Heart left ventricle (tissue), 16 donors: ENCODE measurements at regions of chr1 and their contacts with region 1.

Region 1: GRCh38 chr1:65958561-65959350 is 166.1 kb downstream of the PDE4B start:
- DNase-seq: no peak
- ATAC-seq: peak in 2 of 4 donors; percentile 27 to 54
- H3K4me3 ChIP-seq: no peak overlapping the region
- H3K27ac ChIP-seq: no peak overlapping the region
- H3K4me1 ChIP-seq: no peaks in the 10 kb centered on the region
- H3K27me3 ChIP-seq: no peaks in the 10 kb centered on the region
- CTCF ChIP-seq: peak; percentile 56 to 90 (median 76)
- POLR2A ChIP-seq: no peak

Region 2: DNA sequence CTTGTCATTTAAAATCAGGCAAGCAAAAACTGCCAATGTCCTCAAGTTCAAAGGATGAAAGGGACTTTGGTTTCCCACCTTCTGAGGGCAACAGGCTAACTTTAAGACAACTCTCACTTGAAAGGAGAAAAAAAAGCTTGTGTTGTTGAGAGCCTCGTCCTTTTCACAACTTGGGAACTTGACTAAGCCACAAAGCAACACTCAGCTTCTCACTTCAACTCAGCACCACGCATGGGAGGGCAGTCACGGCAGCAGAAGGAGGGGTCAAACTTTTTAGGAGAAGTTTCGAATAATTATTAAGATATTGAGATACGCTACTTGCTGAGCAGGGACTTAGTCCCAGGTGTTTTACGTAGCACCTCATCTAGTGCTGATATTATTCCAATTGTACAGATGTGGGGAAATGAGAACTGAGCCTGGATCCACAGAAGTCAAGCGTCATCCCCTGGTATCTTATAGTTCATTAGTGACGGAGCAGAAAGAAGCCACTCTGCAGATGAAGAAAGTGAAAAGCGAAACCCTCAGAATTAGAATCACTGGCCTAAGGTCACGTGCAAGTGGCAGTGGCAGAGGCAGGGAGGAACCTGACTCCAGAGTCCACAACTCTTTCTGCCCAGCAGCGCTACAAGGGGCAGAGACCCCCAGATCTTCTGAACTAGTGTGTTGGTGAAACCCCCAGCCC is 1076.0 kb before region 1 on chr1:
- intact Hi-C with region 1: no loop called
- DNase-seq: no peak
- ATAC-seq: no peak
- H3K4me3 ChIP-seq: no peak overlapping the region
- H3K27ac ChIP-seq: no peak overlapping the region
- H3K4me1 ChIP-seq: peaks cover 0 to 62% (median 8%) of the 10 kb centered on the region in 12 donors
- H3K27me3 ChIP-seq: no peaks in the 10 kb centered on the region
- CTCF ChIP-seq: no peak
- POLR2A ChIP-seq: no peak

Region 3: DNA sequence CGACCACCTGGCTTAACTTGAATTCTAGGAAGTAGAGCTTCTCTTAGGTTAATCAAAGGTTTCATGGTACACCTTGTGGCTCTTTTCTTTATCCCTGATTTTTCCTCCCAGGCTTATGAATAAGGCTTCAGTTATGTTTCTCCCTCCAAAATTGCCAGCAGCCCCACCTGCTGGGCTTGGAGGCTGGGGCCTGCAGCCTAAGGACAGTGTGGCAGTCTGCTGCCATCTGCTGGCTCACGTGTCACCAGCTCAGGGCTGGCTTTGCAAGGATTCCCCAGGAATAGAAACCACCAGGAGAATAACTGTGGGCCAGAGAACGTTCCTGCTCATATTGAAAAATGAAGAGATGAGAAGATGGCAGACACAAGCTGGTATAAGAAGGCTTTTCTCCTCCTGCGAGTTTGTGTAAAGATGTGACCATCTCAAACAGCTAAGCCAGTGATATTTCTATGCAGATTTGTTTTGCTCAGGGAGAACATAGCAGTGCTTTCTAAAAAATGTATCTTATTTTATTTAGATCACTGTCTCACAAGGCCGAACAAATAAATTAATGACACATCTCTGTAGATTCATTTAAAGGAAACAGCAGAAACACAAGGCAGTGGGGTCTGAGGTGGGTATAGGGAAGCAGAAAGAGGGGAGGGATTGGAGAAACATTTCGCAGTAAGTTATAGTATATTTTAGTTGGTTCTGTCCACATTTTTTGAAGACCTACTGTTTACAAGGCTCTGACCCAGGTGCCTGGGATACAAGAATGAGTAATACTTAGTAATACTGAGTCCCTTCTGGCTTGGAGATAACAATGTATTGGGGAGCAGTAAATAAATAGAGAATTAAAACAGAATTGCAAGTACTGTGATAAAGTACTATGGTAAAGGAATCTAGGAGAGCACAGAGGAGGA is 284.1 kb after region 1 on chr1:
- intact Hi-C with region 1: loop called (anchors 1 to 2 kb)
- DNase-seq: peak; percentile 80 to 90 (median 87)
- ATAC-seq: peak; percentile 90 to 99 (median 98)
- H3K4me3 ChIP-seq: no peak overlapping the region
- H3K27ac ChIP-seq: no peak overlapping the region
- H3K4me1 ChIP-seq: peaks cover 0 to 4% (median 0%) of the 10 kb centered on the region in 12 donors
- H3K27me3 ChIP-seq: peaks cover 0 to 4% (median 0%) of the 10 kb centered on the region in 9 donors
- CTCF ChIP-seq: peak; percentile 91 to 100 (median 98)
- POLR2A ChIP-seq: no peak

Region 4: DNA sequence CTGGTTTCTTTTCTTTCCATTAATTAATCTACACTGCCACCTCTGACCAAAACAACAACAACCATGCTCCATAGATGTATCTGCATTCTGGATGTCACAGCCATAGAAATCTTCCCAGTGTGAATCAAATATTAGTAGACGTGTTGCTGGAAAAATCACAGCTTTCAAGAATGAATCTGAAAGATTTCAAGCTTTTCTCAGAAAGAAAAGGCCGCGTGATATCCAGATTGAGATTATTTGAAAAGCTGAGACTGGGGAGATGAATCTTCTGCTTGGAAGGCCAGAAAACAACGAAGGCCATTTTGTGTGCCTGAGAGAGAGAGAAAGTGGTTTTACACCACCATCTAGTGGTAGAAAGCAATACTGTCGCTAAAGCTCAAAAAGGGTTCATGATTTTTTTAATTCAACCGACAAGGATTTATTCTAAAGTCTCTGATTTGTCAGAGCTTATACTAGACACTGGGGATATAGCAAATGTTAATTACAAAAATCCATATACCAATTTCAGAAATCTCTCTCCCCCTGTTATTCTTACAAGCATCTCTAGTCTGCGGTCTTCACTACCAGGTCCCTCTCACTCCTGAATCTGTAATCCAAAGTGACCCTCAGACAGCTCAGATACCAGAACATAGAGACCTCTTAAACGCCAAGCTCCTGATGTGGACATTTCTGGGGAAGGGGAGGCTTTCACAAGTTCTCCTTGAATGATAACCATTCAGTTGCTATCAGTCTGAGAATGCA is 487.7 kb after region 1 on chr1:
- intact Hi-C with region 1: loop called (anchors 1 to 5 kb)
- DNase-seq: peak in 2 of 5 donors; percentile 22 to 39
- ATAC-seq: peak in 3 of 4 donors; percentile 41 to 59 (median 57)
- H3K4me3 ChIP-seq: no peak overlapping the region
- H3K27ac ChIP-seq: peak overlapping the region in 5 of 12 donors; percentile 21 to 78 (median 64)
- H3K4me1 ChIP-seq: peaks cover 0 to 40% (median 19%) of the 10 kb centered on the region in 12 donors
- H3K27me3 ChIP-seq: no peaks in the 10 kb centered on the region
- CTCF ChIP-seq: peak; percentile 74 to 94 (median 88)
- POLR2A ChIP-seq: no peak